ENCODE measurements at regions of chr17 and their contacts with region 1.

Region 1: GRCh38 chr17:40516581-40517285 is 15.3 kb upstream of the TNS4 start:
- DNase-seq: no peak
- ATAC-seq: peak; percentile 87
- H3K4me3 Mint-ChIP-seq: peak overlapping the region; percentile 74
- H3K27ac Mint-ChIP-seq: peak overlapping the region; percentile 69
- H3K4me1 Mint-ChIP-seq: peaks cover 62% of the 10 kb centered on the region
- H3K27me3 Mint-ChIP-seq: no peaks in the 10 kb centered on the region
- CTCF ChIP-seq: no peak

Region 2: GRCh38 chr17:40371261-40371929 is 145.3 kb before region 1 on chr17:
- CTCF ChIA-PET with region 1: no interaction called
- POLR2A ChIA-PET with region 1: no interaction called
- intact Hi-C with region 1: no loop called
- DNase-seq: no peak
- ATAC-seq: peak; percentile 82
- H3K4me3 Mint-ChIP-seq: no peak overlapping the region
- H3K27ac Mint-ChIP-seq: no peak overlapping the region
- H3K4me1 Mint-ChIP-seq: peaks cover 2% of the 10 kb centered on the region
- H3K27me3 Mint-ChIP-seq: no peaks in the 10 kb centered on the region
- CTCF ChIP-seq: no peak

Region 3: DNA sequence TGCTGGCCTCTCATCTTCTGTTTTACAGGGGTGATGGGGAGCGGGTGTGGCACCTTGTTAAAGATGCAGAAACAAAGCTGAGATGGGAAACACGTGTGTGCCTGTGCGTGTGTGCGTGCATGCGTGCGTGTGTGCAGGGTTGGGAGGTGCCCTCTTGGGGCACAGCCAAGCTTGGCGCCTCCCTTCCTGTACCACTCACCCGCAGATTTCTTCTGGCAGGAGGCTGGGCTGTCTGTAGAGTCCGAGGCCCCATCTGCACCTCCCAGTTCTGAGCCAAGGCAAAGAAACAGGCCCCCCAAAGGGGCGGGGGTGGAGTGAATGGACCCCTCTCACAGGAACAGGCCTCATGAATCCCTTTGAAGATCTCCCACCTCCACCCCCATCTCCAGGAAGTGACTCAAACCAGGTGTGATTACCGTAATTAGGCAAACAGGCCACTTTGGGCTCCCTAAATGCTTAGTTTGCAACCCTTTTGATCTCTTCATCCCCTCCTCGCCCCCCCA is 36.2 kb before region 1 on chr17:
- CTCF ChIA-PET with region 1: interaction called, 7 read pairs
- POLR2A ChIA-PET with region 1: interaction called, 9 read pairs
- intact Hi-C with region 1: loop called (anchors 5 kb)
- DNase-seq: peak; percentile 32
- ATAC-seq: peak; percentile 88
- H3K4me3 Mint-ChIP-seq: peak overlapping the region; percentile 41
- H3K27ac Mint-ChIP-seq: peak overlapping the region; percentile 72
- H3K4me1 Mint-ChIP-seq: peaks cover 57% of the 10 kb centered on the region
- H3K27me3 Mint-ChIP-seq: no peaks in the 10 kb centered on the region
- CTCF ChIP-seq: no peak